CD8-positive, alpha-beta memory T cell (primary cell): ENCODE measurements at regions of chr15 and their contacts with region 1.

Region 1: GRCh38 chr15:68252925-68253534 is 23.5 kb upstream of the CLN6 start:
- DNase-seq: peak in 3 of 5 donors; percentile 32 to 59 (median 56)
- H3K4me3 ChIP-seq: no peak overlapping the region
- H3K4me3 Mint-ChIP-seq: no peak overlapping the region
- H3K27ac ChIP-seq: no peak overlapping the region
- H3K27ac Mint-ChIP-seq: no peak overlapping the region
- H3K4me1 ChIP-seq: no peaks in the 10 kb centered on the region
- H3K4me1 Mint-ChIP-seq: peaks cover 0 to 8% (median 0%) of the 10 kb centered on the region in 3 donors
- H3K27me3 ChIP-seq: no peaks in the 10 kb centered on the region
- H3K27me3 Mint-ChIP-seq: peaks cover 8 to 15% of the 10 kb centered on the region in 2 donors

Region 2: DNA sequence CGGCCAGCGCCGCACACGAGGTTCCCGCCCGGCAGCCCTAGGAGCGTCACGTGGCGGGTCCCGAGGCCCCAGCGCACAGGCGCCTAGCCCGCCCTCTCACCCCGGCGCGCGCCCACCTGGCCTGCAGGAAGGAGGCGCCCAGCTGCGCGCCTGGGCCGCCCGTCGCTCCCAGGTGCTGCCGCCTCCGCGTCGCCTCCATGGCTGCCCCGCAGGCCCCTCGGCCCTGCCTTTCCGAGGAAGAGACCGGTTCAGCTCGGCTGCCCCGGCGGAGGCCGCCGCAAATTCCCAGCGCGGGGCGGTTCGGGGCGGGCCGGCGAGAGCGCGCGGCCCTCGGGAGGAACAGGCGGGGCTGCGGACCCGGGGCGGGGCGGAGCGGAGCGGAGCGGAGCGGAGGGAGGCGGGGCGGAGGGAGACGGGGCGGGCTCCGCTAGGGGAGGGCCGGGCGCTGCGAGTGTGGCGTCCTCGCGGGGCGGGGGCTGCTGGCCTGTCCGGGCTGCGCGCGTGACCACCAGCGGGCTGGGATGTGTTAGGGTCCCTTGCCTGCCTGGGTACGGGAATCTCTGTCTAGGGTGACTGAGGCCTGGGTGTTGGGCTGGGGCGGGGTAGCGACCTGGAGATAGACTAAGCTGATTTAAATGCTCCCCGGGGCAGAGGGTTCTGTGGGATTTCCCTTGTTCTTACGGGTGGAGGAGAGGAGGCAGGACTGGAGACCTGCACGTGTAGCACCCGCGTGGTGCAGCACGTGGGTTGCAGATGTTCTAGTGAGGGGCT is 23.5 kb before region 1 on chr15 and contains the start of gene CLN6:
- CTCF ChIA-PET with region 1: interaction called, 11 read pairs
- POLR2A ChIA-PET with region 1: no interaction called
- DNase-seq: peak; percentile 75 to 87 (median 82)
- H3K4me3 ChIP-seq: peak within 1 kb of the TSS; percentile 90
- H3K4me3 Mint-ChIP-seq: peak within 1 kb of the TSS; percentile 91 to 96 (median 93)
- H3K27ac ChIP-seq: peak within 1 kb of the TSS; percentile 72
- H3K27ac Mint-ChIP-seq: peak within 1 kb of the TSS; percentile 74 to 95 (median 94)
- H3K4me1 ChIP-seq: peaks cover 17% of the 10 kb centered on the region
- H3K4me1 Mint-ChIP-seq: peaks cover 28 to 38% (median 37%) of the 10 kb centered on the region in 3 donors
- H3K27me3 ChIP-seq: no peaks in the 10 kb centered on the region
- H3K27me3 Mint-ChIP-seq: peaks cover 7 to 10% of the 10 kb centered on the region in 2 donors
- total RNA-seq, gene CLN6: 69.1 to 73.8 TPM

Region 3: GRCh38 chr15:68304589-68305337 is 51.7 kb after region 1 on chr15:
- CTCF ChIA-PET with region 1: interaction called, 19 read pairs
- POLR2A ChIA-PET with region 1: no interaction called
- DNase-seq: no peak
- H3K4me3 ChIP-seq: no peak overlapping the region
- H3K4me3 Mint-ChIP-seq: no peak overlapping the region
- H3K27ac ChIP-seq: no peak overlapping the region
- H3K27ac Mint-ChIP-seq: no peak overlapping the region
- H3K4me1 ChIP-seq: peaks cover 5% of the 10 kb centered on the region
- H3K4me1 Mint-ChIP-seq: peaks cover 12 to 19% (median 16%) of the 10 kb centered on the region in 3 donors
- H3K27me3 ChIP-seq: peaks cover 3% of the 10 kb centered on the region
- H3K27me3 Mint-ChIP-seq: peaks cover 0 to 11% of the 10 kb centered on the region in 2 donors